Activated CD8-positive, alpha-beta memory T cell treated with anti-CD3 and anti-CD28 coated beads, Interleukin-2, amount 10 ng/mL, durations not matched to agents 7 days and 5 days (primary cell): ENCODE measurements at regions of chr16 and their contacts with region 1.

Region 1: DNA sequence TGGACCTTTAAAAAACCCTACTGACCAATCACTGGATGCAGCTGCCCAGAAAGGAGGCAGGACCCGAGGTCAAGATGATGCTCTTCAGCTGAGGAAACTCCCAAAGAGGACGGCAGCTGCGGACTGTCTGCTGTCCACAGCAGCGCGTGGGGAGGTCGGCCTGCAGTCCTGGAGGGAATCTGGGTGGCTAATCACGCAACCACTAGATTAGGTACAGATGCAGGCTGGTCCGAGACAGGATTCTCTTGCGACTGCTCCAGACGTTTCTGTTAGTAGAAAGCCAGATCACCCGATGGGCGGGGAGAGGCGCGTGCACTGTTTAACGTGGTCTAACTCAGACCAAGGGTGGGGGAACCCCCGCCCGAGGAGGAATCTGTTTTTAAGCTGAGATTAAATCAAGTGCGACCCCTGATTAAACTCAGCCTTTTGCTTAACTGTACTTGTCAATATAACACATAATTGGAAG is 8.8 kb downstream of the CTRB2 start:
- DNase-seq: no peak
- ATAC-seq: no peak
- H3K4me3 Mint-ChIP-seq: no peak overlapping the region
- H3K27ac Mint-ChIP-seq: no peak overlapping the region
- H3K4me1 Mint-ChIP-seq: peaks cover 12% of the 10 kb centered on the region
- H3K27me3 Mint-ChIP-seq: peaks cover 24% of the 10 kb centered on the region

Region 2: DNA sequence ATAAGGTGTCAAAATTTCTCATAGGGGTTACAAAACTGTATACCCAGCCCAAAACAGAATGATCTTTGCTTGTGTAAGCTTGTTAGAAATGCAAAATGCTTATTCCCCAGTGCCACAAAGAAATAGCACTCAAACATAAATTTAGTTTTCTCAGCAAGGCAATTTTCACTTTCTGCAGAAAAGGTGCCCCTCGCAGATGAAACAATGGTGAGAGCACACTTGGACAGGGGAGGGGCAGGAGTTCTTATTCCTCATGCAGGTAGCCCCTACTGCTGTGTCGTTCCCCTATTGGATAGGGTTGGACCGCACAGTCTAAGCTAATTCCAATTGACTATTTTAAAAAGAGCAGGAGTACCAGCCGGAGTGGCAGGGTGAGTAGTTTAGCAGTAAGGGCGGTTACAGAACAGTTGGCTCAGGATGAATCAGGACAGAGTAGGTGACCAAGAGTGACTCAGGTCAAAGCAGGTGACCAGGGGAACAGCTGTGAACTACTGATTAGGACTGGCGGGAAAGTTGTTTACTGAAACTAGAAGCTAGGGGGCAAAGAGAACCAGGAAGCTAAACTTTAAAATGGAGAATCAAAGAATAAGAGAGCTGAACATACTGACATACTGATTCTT is 76.1 kb before region 1 on chr16:
- CTCF ChIA-PET with region 1: no interaction called
- DNase-seq: no peak
- ATAC-seq: no peak
- H3K4me3 Mint-ChIP-seq: no peak overlapping the region
- H3K27ac Mint-ChIP-seq: no peak overlapping the region
- H3K4me1 Mint-ChIP-seq: no peaks in the 10 kb centered on the region
- H3K27me3 Mint-ChIP-seq: peaks cover 2% of the 10 kb centered on the region

Region 3: GRCh38 chr16:75138636-75139035 is 59.5 kb before region 1 on chr16:
- CTCF ChIA-PET with region 1: no interaction called
- DNase-seq: no peak
- ATAC-seq: no peak
- H3K4me3 Mint-ChIP-seq: no peak overlapping the region
- H3K27ac Mint-ChIP-seq: no peak overlapping the region
- H3K4me1 Mint-ChIP-seq: peaks cover 8% of the 10 kb centered on the region
- H3K27me3 Mint-ChIP-seq: no peaks in the 10 kb centered on the region

Region 4: GRCh38 chr16:75218256-75219070 is 20.3 kb after region 1 on chr16 and contains the start of gene CTRB1:
- CTCF ChIA-PET with region 1: interaction called, 43 read pairs
- DNase-seq: no peak
- ATAC-seq: no peak
- H3K4me3 Mint-ChIP-seq: peak within 1 kb of the TSS; percentile 71
- H3K27ac Mint-ChIP-seq: peak within 1 kb of the TSS; percentile 89
- H3K4me1 Mint-ChIP-seq: peaks cover 14% of the 10 kb centered on the region
- H3K27me3 Mint-ChIP-seq: no peaks in the 10 kb centered on the region
- total RNA-seq, gene CTRB1: not detected

Region 5: DNA sequence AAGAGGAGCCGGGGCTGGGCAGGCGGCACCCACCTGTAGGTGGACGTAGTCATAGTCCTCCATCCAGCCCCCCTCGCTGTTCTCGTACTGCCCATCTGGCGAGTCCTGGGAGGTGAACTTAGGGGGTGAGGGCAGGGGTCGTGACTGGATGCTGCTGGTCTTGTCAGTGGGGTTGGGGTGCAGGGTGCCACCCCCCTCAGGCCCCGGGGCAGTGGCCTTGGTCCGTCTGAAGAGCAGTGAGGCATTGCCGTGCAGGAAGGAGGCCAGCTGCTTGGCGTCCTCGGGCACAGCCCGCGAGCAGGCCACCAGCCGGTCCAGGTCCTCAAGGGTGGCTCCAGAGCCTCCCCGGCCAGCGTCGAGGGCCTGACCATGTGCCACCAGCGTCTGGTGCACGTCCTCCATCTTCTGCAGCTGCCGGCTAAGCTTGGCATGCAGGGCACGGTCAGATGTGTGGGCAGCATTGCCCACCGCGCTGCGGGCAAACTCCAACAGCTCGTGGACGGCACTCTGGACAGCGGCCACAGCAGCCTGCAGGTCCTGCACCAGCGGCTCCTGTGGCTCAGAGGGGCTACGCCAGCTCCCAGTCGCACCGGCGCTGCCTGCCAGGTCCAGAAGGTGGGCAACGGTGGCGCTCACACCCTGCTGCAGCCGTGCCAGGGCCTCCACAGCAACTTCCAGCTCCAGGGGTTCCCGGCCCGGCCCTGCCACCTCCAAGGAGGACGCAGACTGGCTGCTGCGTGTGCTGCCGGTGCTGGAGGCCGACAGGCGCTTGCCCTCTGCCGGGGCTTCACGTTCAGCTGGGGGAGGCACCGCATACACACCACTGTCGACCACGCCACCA is 36.9 kb after region 1 on chr16:
- CTCF ChIA-PET with region 1: interaction called, 39 read pairs
- DNase-seq: no peak
- ATAC-seq: no peak
- H3K4me3 Mint-ChIP-seq: no peak overlapping the region
- H3K27ac Mint-ChIP-seq: no peak overlapping the region
- H3K4me1 Mint-ChIP-seq: peaks cover 2% of the 10 kb centered on the region
- H3K27me3 Mint-ChIP-seq: peaks cover 5% of the 10 kb centered on the region

Region 6: DNA sequence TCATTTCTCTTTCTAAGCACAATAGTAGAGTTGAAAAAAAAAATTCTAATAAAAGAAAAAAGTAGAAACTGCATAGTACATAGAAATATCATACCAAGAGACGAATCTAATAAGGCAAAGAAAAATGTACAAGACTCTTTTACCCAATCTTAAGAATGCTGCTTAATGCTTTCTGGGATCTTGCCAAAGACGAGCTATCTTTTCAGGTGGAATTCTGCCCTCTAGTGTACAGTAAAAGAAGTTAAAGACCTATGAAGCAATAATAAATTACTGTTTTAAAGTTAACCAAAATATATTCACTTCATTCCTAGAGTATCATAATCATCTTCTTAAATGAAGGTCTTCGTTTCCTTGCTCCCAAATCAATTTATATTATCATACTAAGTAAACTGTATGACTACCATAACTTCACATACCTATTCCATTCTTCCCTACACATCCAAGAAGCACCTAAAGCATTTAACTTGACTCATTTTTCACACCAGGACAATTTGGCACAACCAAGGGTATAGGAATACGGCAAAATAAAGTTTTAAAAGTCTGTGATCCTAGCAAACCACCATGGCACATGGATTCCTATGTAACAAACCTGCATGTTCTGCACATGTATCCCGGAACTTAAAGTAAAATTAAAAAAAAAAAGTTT is 187.5 kb after region 1 on chr16:
- CTCF ChIA-PET with region 1: interaction called, 23 read pairs
- DNase-seq: no peak
- ATAC-seq: peak; percentile 47
- H3K4me3 Mint-ChIP-seq: no peak overlapping the region
- H3K27ac Mint-ChIP-seq: no peak overlapping the region
- H3K4me1 Mint-ChIP-seq: peaks cover 5% of the 10 kb centered on the region
- H3K27me3 Mint-ChIP-seq: peaks cover 16% of the 10 kb centered on the region

Region 7: DNA sequence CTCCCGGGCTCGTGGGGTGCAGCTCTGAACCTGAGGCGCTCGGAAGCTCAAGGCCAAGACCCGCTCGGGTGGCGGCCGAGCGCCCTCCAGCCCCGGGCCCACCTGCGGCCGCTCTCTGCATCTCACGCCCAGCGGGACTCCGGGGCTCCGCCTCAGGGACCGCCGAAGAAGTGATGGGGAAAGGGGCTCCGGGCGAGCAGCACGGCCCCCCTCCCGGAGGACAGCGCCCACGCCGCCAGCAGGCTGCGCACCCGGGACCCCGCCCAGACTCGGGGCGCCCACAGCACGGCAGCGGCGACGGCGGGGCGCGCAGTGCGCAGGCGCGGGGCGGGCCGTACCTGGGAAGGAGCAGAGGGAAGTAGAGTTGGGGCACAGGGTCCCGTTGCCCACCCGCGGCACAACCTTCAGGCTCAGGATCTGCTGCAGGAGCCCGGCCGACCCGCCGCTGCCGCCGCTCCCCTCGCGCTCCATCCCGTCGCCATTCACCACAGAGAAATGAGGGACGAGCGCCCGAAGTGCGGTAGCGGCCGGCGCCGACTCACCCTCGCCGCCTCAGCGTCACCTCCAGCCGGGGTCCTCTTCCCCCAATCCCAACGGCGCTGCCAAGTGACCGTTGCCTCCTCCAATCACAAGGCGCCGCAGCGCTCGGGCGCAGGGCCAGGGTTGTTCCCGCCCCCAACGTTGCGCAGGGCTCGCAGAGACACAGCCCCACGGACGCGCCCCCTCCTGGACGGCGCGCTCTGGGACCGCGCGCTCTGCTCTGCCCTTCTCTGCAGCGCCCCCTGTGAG is 266.2 kb after region 1 on chr16 and contains the start of gene TMEM170A:
- CTCF ChIA-PET with region 1: interaction called, 23 read pairs
- DNase-seq: peak; percentile 99
- ATAC-seq: peak; percentile 96
- H3K4me3 Mint-ChIP-seq: peak within 1 kb of the TSS; percentile 90
- H3K27ac Mint-ChIP-seq: peak within 1 kb of the TSS; percentile 86
- H3K4me1 Mint-ChIP-seq: peaks cover 46% of the 10 kb centered on the region
- H3K27me3 Mint-ChIP-seq: no peaks in the 10 kb centered on the region
- total RNA-seq, gene TMEM170A: 31.1 to 33.7 TPM